ENCODE measurements at regions of chr12 and their contacts with region 1.

Region 1: DNA sequence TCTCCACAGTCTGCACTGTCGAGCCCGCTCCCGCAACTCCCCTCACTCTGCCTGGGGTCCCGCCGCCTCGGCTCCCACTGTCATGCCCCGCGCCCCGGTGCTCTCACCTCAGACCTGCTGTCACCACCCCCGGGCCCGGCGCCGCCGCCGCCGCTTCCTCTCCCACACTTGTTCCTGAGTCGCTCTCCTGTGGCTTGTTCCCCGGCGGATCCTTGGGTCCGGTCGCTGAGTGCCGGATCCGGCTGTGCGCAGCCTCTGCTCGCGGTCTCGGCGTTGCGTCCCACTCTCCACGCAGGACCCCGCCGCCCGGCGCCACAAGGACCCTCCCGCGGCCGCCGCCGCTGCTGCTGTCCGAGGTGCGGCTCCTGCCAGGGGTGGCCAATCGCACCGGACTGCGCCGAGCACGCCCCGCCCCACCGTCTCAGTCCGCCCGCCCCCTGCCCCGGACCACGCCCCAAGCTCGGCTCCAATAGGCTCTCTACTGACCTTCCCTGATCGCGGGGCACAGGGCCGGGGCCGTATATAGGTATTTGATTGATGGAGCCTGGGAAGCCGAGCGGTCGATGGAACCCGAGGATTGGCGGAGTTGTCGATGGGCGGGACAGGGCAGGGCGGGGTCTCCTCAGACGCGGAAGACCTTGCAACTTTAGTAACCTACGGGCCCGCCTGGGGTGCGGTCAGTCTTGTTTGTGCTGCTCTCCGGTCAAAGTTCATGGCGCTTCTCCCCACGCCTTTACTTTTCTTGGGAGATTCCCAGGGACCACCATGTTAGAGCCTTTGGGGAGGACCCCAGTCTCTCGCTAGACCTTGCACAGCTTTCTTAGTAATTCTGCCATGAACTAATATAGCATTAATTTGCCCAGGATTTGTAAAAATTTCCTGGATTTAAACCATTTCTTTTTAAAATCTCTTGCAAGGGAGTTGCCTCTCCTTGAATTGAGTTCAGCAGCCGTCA is at the start of gene TAOK3:
- DNase-seq: peak; percentile 98 to 99
- ATAC-seq: peak; percentile 86 to 94 (median 92)
- H3K4me3 ChIP-seq: peak within 1 kb of the TSS; percentile 99
- H3K27ac ChIP-seq: peak within 1 kb of the TSS; percentile 96
- H3K4me1 ChIP-seq: peaks cover 45% of the 10 kb centered on the region
- H3K27me3 ChIP-seq: no peaks in the 10 kb centered on the region
- CTCF ChIP-seq: no peak
- total RNA-seq, gene TAOK3: 13.5 to 18.4 (median 18.2) TPM

Region 2: DNA sequence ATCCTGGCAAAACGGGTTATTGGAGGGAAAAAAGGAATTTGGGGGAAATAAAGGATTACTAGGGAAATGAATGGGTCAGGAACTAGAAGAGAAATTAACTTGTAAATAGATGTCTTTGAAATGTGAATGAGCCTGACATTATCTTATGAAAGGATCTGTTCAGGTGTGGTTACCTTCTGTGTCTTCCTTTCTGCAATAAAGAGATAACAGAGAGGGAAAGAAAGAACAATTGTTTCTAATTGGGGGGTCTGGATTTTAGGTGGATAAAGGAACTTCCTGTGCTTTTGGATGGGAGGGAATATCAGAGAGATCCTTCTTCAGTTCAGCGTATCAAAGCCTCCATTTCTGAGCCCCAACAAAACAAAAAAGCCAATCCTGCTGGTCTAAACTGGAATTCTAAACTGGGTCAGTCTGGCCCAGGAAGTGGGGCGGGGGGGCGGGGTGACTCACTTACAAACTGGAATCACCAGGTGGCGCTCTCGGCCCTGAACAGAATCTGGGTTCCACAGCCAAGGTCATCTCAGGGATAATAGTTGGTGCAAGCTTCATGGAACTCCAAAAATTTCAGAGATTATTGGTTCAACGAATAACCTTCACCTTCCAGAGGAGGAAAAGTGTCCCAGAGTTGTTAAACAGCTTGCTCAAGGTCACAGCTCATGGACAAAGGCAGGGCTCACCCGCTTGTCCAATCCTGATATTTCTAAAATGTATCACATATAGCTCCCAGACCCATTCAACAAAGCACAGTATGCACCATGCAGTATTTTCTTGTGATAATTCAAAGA is 252.0 kb before region 1 on chr12:
- intact Hi-C with region 1: loop called (anchors 2 to 10 kb)
- DNase-seq: peak; percentile 73 to 85
- ATAC-seq: peak; percentile 74 to 93 (median 85)
- H3K4me3 ChIP-seq: no peak overlapping the region
- H3K27ac ChIP-seq: peak overlapping the region; percentile 58
- H3K4me1 ChIP-seq: peaks cover 10% of the 10 kb centered on the region
- H3K27me3 ChIP-seq: no peaks in the 10 kb centered on the region
- CTCF ChIP-seq: peak; percentile 71

Region 3: DNA sequence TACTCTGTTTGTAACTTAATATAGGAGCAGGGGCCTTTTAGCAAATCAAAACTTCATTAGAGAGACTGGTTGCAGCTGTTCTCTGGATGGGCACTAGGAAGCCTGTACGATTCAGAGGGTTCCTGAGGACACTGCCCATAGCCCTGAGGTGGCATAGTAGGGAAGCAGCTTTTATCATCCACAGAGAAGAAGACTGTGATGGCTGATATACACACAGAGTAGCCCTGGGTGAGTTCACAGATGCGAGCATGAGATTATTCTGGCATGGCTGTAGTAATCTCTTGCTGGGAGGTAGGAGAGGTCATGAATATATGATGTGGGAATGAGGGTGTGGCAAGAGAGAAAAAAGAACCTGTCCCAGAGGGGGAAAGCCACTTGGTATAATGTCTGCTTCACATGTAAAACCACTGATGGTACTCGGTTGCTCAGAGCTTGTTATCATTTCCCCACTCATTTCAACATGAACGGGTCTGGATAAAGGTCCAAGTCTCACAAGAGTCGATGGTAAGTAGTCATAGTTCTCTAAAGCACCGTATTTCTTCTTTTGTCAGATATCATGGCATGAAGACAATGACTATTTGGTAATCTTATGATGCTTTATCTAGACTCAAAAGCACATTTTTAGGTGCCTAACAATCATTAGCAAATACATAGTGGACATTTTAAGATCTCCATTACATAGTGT is 184.9 kb before region 1 on chr12:
- intact Hi-C with region 1: loop called in 1 of 2 experiments (anchors 2 kb)
- DNase-seq: no peak
- ATAC-seq: peak; percentile 28 to 50 (median 46)
- H3K4me3 ChIP-seq: peak overlapping the region; percentile 62
- H3K27ac ChIP-seq: peak overlapping the region; percentile 19
- H3K4me1 ChIP-seq: peaks cover 44% of the 10 kb centered on the region
- H3K27me3 ChIP-seq: no peaks in the 10 kb centered on the region
- CTCF ChIP-seq: no peak